ENCODE measurements at regions of chr15 and their contacts with region 1.

Region 1: DNA sequence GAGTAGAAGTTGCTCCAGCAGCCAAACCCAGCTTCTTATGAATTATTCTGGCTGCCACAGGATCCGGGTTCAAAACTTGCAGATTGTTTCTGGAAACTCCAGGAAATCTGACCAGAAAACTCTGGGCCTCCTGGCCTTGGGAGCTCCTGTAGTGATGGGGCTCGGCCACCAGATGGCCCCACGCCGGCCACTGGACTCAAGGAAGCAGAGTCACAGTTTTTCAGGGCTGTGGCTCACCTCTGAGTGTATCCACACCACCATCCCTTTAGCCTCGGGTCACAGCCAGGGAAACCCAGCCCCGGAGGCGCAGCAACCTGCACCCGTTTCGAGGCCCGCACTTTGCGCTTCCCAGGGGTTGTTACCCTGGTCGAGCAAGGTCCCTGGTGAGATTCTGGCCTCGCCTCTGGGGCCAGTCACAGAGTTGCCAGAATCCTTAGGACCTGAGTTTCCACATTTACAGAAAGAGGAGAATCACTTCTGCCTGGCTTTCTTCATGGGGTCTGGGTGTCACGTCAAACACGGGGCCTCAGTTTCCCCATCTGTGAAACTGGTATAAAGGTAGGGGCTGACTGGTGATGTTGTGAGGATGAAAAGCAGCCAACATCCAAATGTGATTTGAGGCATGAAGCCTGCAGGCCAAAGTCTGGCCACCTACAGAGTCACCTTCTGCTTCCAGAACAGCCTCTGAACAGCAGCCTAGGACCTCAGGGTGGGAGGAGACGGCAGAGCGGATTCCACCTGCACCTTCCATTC is 53.5 kb upstream of the LCTL start:
- DNase-seq: peak; percentile 68
- H3K4me3 Mint-ChIP-seq: no peak overlapping the region
- H3K27ac Mint-ChIP-seq: no peak overlapping the region
- H3K4me1 Mint-ChIP-seq: no peaks in the 10 kb centered on the region
- H3K27me3 Mint-ChIP-seq: no peaks in the 10 kb centered on the region
- CTCF ChIP-seq: peak; percentile 86

Region 2: GRCh38 chr15:66603301-66604179 is 15.8 kb before region 1 on chr15:
- CTCF ChIA-PET with region 1: interaction called, 18 read pairs
- POLR2A ChIA-PET with region 1: interaction called, 3 read pairs
- intact Hi-C with region 1: no loop called
- DNase-seq: peak; percentile 57
- H3K4me3 Mint-ChIP-seq: no peak overlapping the region
- H3K27ac Mint-ChIP-seq: no peak overlapping the region
- H3K4me1 Mint-ChIP-seq: no peaks in the 10 kb centered on the region
- H3K27me3 Mint-ChIP-seq: no peaks in the 10 kb centered on the region
- CTCF ChIP-seq: peak; percentile 78

Region 3: DNA sequence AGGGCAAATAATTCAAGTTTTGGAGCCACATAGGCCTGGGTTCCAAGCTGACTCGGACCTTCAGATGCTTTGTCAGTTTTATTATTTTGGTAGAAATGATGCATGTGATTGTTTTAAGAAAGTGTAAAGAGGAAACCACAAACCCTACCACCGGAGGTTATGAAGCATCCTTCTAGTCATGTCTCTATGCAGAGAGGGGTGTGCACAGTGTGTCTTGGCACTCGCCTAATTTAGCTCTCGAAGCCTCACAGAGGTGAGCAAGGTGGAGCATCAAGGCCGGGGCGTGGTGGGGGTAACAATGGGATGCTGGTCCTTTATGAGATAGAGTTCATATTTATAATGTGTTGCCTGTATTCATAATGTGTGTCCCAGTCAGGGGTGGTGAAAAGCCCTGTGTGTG is 19.1 kb after region 1 on chr15:
- CTCF ChIA-PET with region 1: interaction called, 13 read pairs
- POLR2A ChIA-PET with region 1: no interaction called
- intact Hi-C with region 1: no loop called
- DNase-seq: no peak
- H3K4me3 Mint-ChIP-seq: no peak overlapping the region
- H3K27ac Mint-ChIP-seq: no peak overlapping the region
- H3K4me1 Mint-ChIP-seq: no peaks in the 10 kb centered on the region
- H3K27me3 Mint-ChIP-seq: no peaks in the 10 kb centered on the region
- CTCF ChIP-seq: no peak

Region 4: DNA sequence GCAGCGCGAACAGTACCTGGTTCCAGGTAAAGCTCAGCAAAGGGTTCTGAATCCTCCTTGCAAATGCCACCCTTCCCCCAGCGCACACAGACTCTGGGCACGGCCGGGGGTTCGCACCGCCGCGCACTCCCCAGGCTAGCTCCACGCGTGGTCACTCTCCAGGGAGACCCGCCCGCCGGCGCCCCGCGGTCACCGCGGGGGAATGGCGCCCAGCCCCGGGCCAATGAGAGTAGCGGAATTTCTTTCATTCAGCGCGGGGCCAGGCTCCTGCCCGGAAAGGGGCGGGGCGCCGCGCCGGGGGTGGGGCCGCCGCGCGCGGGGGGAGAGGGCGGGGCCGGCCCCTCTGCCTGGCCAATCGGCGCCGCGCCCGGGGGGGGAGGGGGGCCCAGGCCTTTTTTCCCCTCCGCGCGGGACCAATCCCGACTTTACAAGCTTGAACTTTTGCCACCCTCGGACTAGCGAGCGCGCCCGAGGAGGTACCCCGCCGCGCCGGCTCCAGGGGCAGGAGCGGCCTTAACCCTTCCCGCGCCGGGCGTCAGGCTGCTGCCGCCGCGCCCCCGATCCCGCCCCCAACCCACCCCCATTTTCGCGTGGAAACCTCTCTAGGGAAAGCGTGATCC is 81.6 kb after region 1 on chr15:
- CTCF ChIA-PET with region 1: interaction called, 7 read pairs
- POLR2A ChIA-PET with region 1: no interaction called
- intact Hi-C with region 1: loop called (anchors 1 kb)
- DNase-seq: peak; percentile 95
- H3K4me3 Mint-ChIP-seq: peak overlapping the region; percentile 79
- H3K27ac Mint-ChIP-seq: no peak overlapping the region
- H3K4me1 Mint-ChIP-seq: peaks cover 12% of the 10 kb centered on the region
- H3K27me3 Mint-ChIP-seq: peaks cover 18% of the 10 kb centered on the region
- CTCF ChIP-seq: no peak

Region 5: DNA sequence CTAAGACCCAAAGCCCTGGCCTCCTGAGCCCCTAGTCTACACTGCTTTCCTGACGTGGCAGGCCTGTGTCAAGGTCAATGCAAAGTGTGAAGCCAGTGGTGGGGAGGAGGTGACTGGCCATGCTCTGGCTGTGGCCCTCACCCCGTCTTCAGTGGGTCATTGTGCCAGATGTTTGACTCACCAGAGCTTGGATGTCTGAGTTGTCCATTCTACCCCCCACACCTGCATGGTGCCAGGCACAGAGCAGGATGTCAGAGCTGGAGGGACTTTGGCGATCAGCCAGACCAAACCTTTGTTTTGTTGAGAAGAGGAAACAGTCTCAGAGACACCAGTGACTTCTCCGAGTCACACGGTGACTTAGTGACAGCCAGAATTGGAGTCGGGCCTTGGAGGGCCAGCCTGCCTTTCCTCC is 132.2 kb after region 1 on chr15:
- CTCF ChIA-PET with region 1: no interaction called
- POLR2A ChIA-PET with region 1: no interaction called
- intact Hi-C with region 1: no loop called
- DNase-seq: no peak
- H3K4me3 Mint-ChIP-seq: no peak overlapping the region
- H3K27ac Mint-ChIP-seq: no peak overlapping the region
- H3K4me1 Mint-ChIP-seq: peaks cover 10% of the 10 kb centered on the region
- H3K27me3 Mint-ChIP-seq: no peaks in the 10 kb centered on the region
- CTCF ChIP-seq: no peak

Region 6: DNA sequence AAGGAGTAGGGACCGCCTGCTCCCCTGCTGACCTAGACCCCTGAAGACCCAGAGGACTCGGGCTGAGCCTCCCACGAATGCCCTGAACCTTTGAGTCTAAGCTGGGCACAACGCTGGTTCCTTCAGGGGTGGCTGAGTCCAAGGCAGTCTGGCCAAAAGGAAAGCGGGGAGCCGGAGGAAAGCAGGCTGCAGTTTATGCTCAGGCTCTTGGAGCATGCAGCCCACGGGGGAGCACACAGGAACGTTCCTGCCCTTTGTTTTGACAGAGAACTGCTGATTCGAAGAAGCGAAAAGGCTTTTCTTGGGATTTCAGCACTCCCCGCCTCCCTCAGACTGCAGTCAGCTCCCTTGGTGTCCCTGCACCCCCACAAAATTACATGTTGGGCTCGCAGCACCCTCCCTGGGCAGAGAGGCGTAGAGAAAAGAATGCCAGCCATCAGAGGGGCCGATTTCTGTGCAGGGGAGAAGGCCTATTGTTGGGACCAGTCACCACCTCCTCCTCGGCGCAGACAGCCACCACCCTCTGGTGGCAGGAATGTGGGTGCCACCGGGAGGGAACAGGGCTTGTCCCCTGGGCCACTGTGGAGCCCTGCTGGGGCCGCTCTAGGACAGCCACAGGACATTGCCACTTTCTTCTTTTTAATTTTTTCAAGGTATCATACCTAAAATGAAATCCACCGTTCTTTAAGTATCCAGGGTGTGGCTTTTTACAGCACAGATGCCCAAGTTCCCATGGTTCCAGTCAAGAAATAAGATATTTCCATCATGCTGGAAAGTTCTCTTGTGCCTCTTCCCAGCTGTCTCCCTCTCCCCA is 154.9 kb after region 1 on chr15:
- CTCF ChIA-PET with region 1: interaction called, 31 read pairs
- POLR2A ChIA-PET with region 1: interaction called, 3 read pairs
- intact Hi-C with region 1: loop called (anchors 1 kb)
- DNase-seq: peak; percentile 80
- H3K4me3 Mint-ChIP-seq: no peak overlapping the region
- H3K27ac Mint-ChIP-seq: no peak overlapping the region
- H3K4me1 Mint-ChIP-seq: no peaks in the 10 kb centered on the region
- H3K27me3 Mint-ChIP-seq: no peaks in the 10 kb centered on the region
- CTCF ChIP-seq: peak; percentile 94

Region 7: GRCh38 chr15:66862878-66863335 is 243.6 kb after region 1 on chr15:
- CTCF ChIA-PET with region 1: interaction called, 11 read pairs
- POLR2A ChIA-PET with region 1: no interaction called
- intact Hi-C with region 1: no loop called
- DNase-seq: peak; percentile 84
- H3K4me3 Mint-ChIP-seq: no peak overlapping the region
- H3K27ac Mint-ChIP-seq: no peak overlapping the region
- H3K4me1 Mint-ChIP-seq: peaks cover 20% of the 10 kb centered on the region
- H3K27me3 Mint-ChIP-seq: no peaks in the 10 kb centered on the region
- CTCF ChIP-seq: peak; percentile 86

Region 8: GRCh38 chr15:66901336-66902100 is 282.2 kb after region 1 on chr15:
- CTCF ChIA-PET with region 1: no interaction called
- POLR2A ChIA-PET with region 1: no interaction called
- intact Hi-C with region 1: loop called (anchors 5 kb)
- DNase-seq: no peak
- H3K4me3 Mint-ChIP-seq: no peak overlapping the region
- H3K27ac Mint-ChIP-seq: no peak overlapping the region
- H3K4me1 Mint-ChIP-seq: peaks cover 22% of the 10 kb centered on the region
- H3K27me3 Mint-ChIP-seq: no peaks in the 10 kb centered on the region
- CTCF ChIP-seq: no peak